ENCODE measurements at regions of chr10 and their contacts with region 1.

Region 1: DNA sequence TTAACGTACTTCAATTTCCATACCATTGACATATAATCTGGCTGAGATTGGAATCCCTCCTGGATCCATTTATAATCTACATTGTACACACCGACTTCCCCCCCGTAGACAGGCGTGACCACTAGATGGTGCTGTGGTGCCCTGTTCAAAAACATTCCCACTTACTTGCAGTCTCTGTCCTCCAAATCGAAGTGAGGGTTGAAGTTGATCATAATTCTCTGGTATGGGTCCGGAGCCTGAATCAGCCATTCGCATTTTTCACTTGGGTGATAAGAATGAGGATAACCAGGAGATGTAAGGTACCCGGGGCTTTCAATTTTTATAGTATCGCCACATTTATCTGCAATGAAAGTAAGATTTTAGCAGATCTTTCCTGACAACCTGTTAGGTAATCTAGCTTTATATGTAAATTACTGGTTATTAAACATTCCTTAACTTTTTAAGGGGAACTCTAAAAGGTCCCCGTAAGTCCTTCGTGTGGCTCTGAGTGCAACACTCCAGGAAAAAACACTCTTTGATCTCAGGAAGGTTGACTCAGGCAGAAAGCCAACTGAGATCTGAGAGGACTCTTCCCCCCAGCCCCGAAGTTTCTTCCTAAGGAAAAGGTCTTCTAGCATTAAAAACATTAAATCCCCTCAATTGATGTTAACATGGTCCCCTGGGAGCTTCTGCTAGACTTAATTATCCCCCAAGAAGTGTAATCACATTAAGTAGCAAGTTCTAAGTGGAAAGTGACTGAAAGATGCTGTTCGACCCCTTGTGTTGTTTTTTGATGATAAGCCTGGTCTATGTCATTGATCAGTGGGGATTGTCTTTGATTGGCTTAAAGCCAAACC is 3.7 kb downstream of the NRP1 start:
- DNase-seq: peak; percentile 13
- ATAC-seq: peak; percentile 70
- H3K4me3 ChIP-seq: no peak overlapping the region
- H3K27ac ChIP-seq: no peak overlapping the region
- H3K4me1 ChIP-seq: no peaks in the 10 kb centered on the region
- H3K27me3 ChIP-seq: peaks cover 3% of the 10 kb centered on the region in 2 experiments; a peak in 2 of 4 replicates
- CTCF ChIP-seq: peak; percentile 77 to 88 (median 87)
- EP300 ChIP-seq: no peak
- POLR2A ChIP-seq: no peak
- RAD21 ChIP-seq: peak; percentile 87

Region 2: GRCh38 chr10:33373263-33373662 is 42.5 kb after region 1 on chr10:
- CTCF ChIA-PET with region 1: interaction called, 3 read pairs
- POLR2A ChIA-PET with region 1: interaction called, 3 read pairs
- RAD21 ChIA-PET with region 1: interaction called, 9 read pairs
- SMC1A ChIA-PET with region 1: interaction called, 22 read pairs
- in situ Hi-C with region 1: no loop called
- intact Hi-C with region 1: no loop called
- DNase-seq: no peak
- ATAC-seq: peak; percentile 73
- H3K4me3 ChIP-seq: no peak overlapping the region
- H3K27ac ChIP-seq: no peak overlapping the region
- H3K4me1 ChIP-seq: no peaks in the 10 kb centered on the region
- H3K27me3 ChIP-seq: no peaks in the 10 kb centered on the region
- CTCF ChIP-seq: no peak
- EP300 ChIP-seq: no peak
- POLR2A ChIP-seq: no peak
- RAD21 ChIP-seq: no peak

Region 3: DNA sequence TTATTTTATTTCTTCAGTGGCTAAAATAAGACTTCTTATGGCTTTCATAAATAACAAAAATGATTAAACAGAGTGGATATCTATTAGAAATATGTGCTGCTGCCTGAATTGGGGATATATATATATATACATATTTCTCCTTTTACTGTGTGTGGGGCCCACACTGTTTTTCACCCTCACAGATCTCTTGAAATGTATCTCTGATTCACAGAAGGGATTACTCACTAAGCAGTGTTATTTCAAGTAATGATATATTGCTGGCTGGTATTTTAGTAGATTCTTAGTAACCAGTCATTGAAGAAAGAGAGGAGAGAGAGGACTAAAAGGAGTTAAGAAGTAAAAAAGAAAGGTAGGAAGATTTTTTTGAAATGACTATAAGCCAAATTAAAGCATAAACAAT is 312.3 kb after region 1 on chr10:
- CTCF ChIA-PET with region 1: interaction called, 3 read pairs
- POLR2A ChIA-PET with region 1: no interaction called
- RAD21 ChIA-PET with region 1: interaction called, 3 read pairs
- SMC1A ChIA-PET with region 1: interaction called, 3 read pairs
- in situ Hi-C with region 1: no loop called
- intact Hi-C with region 1: loop called (anchors 10 kb)
- DNase-seq: no peak
- ATAC-seq: no peak
- H3K4me3 ChIP-seq: no peak overlapping the region
- H3K27ac ChIP-seq: no peak overlapping the region
- H3K4me1 ChIP-seq: no peaks in the 10 kb centered on the region
- H3K27me3 ChIP-seq: no peaks in the 10 kb centered on the region
- CTCF ChIP-seq: no peak
- EP300 ChIP-seq: no peak
- POLR2A ChIP-seq: no peak
- RAD21 ChIP-seq: no peak

Region 4: GRCh38 chr10:33760056-33760943 is 429.5 kb after region 1 on chr10:
- CTCF ChIA-PET with region 1: no interaction called
- POLR2A ChIA-PET with region 1: interaction called, 3 read pairs
- RAD21 ChIA-PET with region 1: interaction called, 3 read pairs
- SMC1A ChIA-PET with region 1: interaction called, 10 read pairs
- in situ Hi-C with region 1: no loop called
- intact Hi-C with region 1: no loop called
- DNase-seq: no peak
- ATAC-seq: no peak
- H3K4me3 ChIP-seq: no peak overlapping the region
- H3K27ac ChIP-seq: no peak overlapping the region
- H3K4me1 ChIP-seq: no peaks in the 10 kb centered on the region
- H3K27me3 ChIP-seq: no peaks in the 10 kb centered on the region
- CTCF ChIP-seq: no peak
- EP300 ChIP-seq: no peak
- POLR2A ChIP-seq: no peak
- RAD21 ChIP-seq: no peak

Region 5: GRCh38 chr10:34522546-34522945 is 1191.8 kb after region 1 on chr10:
- CTCF ChIA-PET with region 1: interaction called, 4 read pairs
- POLR2A ChIA-PET with region 1: no interaction called
- RAD21 ChIA-PET with region 1: interaction called, 10 read pairs
- SMC1A ChIA-PET with region 1: interaction called, 4 read pairs
- in situ Hi-C with region 1: loop called (anchors 10 kb)
- intact Hi-C with region 1: loop called (anchors 5 kb)
- DNase-seq: no peak
- ATAC-seq: peak; percentile 63
- H3K4me3 ChIP-seq: no peak overlapping the region
- H3K27ac ChIP-seq: no peak overlapping the region
- H3K4me1 ChIP-seq: peaks cover 7% of the 10 kb centered on the region; the same call in 1 of the 2 replicates
- H3K27me3 ChIP-seq: no peaks in the 10 kb centered on the region
- CTCF ChIP-seq: peak; percentile 62 to 63 (median 63)
- EP300 ChIP-seq: no peak
- POLR2A ChIP-seq: no peak
- RAD21 ChIP-seq: peak; percentile 84